Head of caudate nucleus (tissue), 42 donors: ENCODE measurements at regions of chr3 and their contacts with region 1.

Region 1: GRCh38 chr3:185176750-185177359 is 24.0 kb upstream of the C3orf70 start:
- DNase-seq: peak in 34 of 42 donors; percentile 9 to 83 (median 58)

Region 2: GRCh38 chr3:184874709-184875644 is 301.9 kb before region 1 on chr3:
- intact Hi-C with region 1: loop called (anchors 10 kb)
- DNase-seq: peak in 28 of 42 donors; percentile 7 to 74 (median 40)

Region 3: DNA sequence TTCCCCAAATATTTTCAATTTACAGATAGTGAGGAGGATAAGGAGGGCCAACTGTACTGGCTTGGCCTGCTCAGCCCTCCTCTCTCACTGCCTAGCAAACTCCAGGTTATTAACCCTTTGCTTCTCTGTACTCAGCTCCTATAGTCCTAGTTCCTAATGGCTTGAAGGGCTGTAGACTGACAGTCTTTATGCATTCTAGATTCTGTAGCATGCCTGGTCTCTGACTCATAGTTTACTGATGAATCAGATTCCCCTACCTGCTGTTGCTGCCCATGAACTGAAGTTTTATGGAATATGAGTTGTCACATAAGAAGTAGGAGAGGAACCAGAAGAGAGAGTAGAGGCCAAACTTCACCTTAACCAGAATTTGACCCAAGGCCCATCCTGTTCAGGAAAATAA is 158.9 kb after region 1 on chr3:
- intact Hi-C with region 1: no loop called
- DNase-seq: no peak